Dendritic cell treated with granulocyte-macrophage colony-stimulating factor and Interleukin-4, amounts not matched to agents 40 ng/mL and 50 ng/mL, for 4 days (primary cell): ENCODE measurements at regions of chr2 and their contacts with region 1.

Region 1: GRCh38 chr2:69306822-69307578 is 80.0 kb downstream of the GFPT1 start:
- H3K4me3 Mint-ChIP-seq: peak overlapping the region; percentile 83
- H3K27ac Mint-ChIP-seq: peak overlapping the region; percentile 75
- H3K4me1 Mint-ChIP-seq: peaks cover 18% of the 10 kb centered on the region
- H3K27me3 Mint-ChIP-seq: peaks cover 38% of the 10 kb centered on the region

Region 2: GRCh38 chr2:69026026-69026425 is 281.0 kb before region 1 on chr2:
- intact Hi-C with region 1: loop called (anchors 1 kb)
- H3K4me3 Mint-ChIP-seq: no peak overlapping the region
- H3K27ac Mint-ChIP-seq: no peak overlapping the region
- H3K4me1 Mint-ChIP-seq: no peaks in the 10 kb centered on the region
- H3K27me3 Mint-ChIP-seq: peaks cover 4% of the 10 kb centered on the region